ENCODE measurements at regions of chr15 and their contacts with region 1.

Region 1: GRCh38 chr15:43204016-43204901 is 16.6 kb downstream of the EPB42 start:
- DNase-seq: peak; percentile 83
- ATAC-seq: peak; percentile 86
- H3K4me3 Mint-ChIP-seq: no peak overlapping the region
- H3K27ac Mint-ChIP-seq: no peak overlapping the region
- H3K4me1 Mint-ChIP-seq: peaks cover 8% of the 10 kb centered on the region
- H3K27me3 Mint-ChIP-seq: peaks cover 6% of the 10 kb centered on the region
- CTCF ChIP-seq: peak; percentile 65

Region 2: GRCh38 chr15:43150191-43150929 is 53.9 kb before region 1 on chr15:
- CTCF ChIA-PET with region 1: no interaction called
- POLR2A ChIA-PET with region 1: no interaction called
- intact Hi-C with region 1: no loop called
- DNase-seq: no peak
- ATAC-seq: no peak
- H3K4me3 Mint-ChIP-seq: no peak overlapping the region
- H3K27ac Mint-ChIP-seq: no peak overlapping the region
- H3K4me1 Mint-ChIP-seq: peaks cover 8% of the 10 kb centered on the region
- H3K27me3 Mint-ChIP-seq: no peaks in the 10 kb centered on the region
- CTCF ChIP-seq: no peak

Region 3: GRCh38 chr15:43185157-43186017 is 18.9 kb before region 1 on chr15 and contains the start of gene CCNDBP1:
- CTCF ChIA-PET with region 1: interaction called, 29 read pairs
- POLR2A ChIA-PET with region 1: interaction called, 3 read pairs
- intact Hi-C with region 1: no loop called
- DNase-seq: peak; percentile 96
- ATAC-seq: peak; percentile 95
- H3K4me3 Mint-ChIP-seq: peak within 1 kb of the TSS; percentile 88
- H3K27ac Mint-ChIP-seq: peak within 1 kb of the TSS; percentile 93
- H3K4me1 Mint-ChIP-seq: peaks cover 28% of the 10 kb centered on the region
- H3K27me3 Mint-ChIP-seq: no peaks in the 10 kb centered on the region
- CTCF ChIP-seq: peak; percentile 64
- total RNA-seq, gene CCNDBP1: 49.2 to 54.1 TPM

Region 4: GRCh38 chr15:43218908-43219706 is 14.8 kb after region 1 on chr15:
- CTCF ChIA-PET with region 1: interaction called, 17 read pairs
- POLR2A ChIA-PET with region 1: interaction called, 5 read pairs
- intact Hi-C with region 1: no loop called
- DNase-seq: peak; percentile 41
- ATAC-seq: peak; percentile 39
- H3K4me3 Mint-ChIP-seq: no peak overlapping the region
- H3K27ac Mint-ChIP-seq: no peak overlapping the region
- H3K4me1 Mint-ChIP-seq: no peaks in the 10 kb centered on the region
- H3K27me3 Mint-ChIP-seq: peaks cover 1% of the 10 kb centered on the region
- CTCF ChIP-seq: no peak